SK-N-SH (cell line): ENCODE measurements at regions of chr15 and their contacts with region 1.

Region 1: DNA sequence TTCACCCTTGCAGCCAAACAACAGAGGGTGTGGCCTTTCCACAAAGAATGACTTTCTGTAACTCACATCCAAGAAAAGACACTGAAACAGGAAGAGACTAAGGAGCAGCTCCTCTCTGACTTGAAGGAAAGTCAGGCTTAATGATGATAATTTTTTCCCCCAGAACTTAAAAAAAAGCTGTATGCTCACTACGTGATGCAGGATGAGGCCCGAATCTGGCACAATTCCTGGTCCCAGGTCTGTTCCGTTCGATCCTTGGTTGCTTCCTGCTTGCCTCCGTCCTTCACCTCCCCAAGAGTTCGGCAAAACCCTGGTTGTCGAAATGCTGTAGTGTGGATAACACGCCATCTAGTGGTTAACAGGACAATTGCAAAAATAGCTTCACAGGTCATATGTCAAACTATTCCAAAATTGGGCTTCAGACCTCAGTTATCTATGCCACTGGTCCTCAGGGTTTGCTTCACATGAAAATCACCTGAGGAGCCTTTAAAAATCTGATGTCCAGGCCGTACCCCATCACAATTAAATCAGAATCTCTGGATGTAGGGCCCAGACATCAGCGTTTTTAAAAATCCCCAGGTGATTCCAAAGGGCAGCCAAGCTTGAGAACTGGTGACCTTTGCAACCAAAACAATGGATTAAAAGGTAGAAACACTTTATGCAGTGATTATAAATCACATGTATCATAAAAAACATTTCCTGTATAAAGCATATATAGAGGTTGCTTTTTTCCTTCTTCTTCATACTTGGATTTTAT is 28.1 kb upstream of the SYNM start:
- DNase-seq: peak; percentile 74
- H3K4me3 ChIP-seq: peak overlapping the region; percentile 36 to 60
- H3K27ac ChIP-seq: peak overlapping the region in 1 of 2 experiments; percentile 45; a peak in 2 of 4 replicates
- H3K4me1 ChIP-seq: no peaks in the 10 kb centered on the region; a peak in 1 of 4 replicates
- H3K27me3 ChIP-seq: no peaks in the 10 kb centered on the region
- CTCF ChIP-seq: peak; percentile 91
- EP300 ChIP-seq: no peak
- RAD21 ChIP-seq: peak; percentile 94

Region 2: DNA sequence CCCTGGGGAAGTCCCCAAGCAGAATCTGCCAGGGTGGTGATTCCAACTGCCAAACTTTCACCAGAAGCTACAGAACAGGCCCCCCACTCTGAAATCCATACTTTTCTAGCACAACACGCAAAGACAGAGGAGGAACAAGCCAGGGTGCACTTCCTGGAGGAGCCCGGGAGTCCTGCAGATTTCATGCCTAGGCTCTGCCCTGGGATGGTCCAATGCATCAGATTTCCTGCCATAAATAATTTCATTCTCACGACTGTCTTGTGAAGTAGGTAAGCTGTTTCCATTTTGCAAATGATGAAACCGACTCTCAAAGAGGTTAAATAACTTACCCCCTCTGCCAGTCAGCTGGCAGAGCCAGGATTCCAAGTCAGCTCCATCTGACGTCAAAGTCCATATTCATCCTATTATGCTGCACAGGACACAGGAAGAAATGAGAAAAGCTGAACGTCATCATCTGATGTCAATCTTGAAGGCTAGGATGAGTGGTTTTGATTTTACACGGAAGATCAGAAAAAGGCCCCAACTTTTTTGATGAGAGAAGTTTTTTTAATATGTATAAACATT is 563.2 kb before region 1 on chr15:
- CTCF ChIA-PET with region 1: interaction called, 41 read pairs
- POLR2A ChIA-PET with region 1: no interaction called
- DNase-seq: no peak
- H3K4me3 ChIP-seq: no peak overlapping the region
- H3K27ac ChIP-seq: no peak overlapping the region
- H3K4me1 ChIP-seq: no peaks in the 10 kb centered on the region
- H3K27me3 ChIP-seq: no peaks in the 10 kb centered on the region
- CTCF ChIP-seq: no peak
- EP300 ChIP-seq: no peak
- RAD21 ChIP-seq: no peak

Region 3: DNA sequence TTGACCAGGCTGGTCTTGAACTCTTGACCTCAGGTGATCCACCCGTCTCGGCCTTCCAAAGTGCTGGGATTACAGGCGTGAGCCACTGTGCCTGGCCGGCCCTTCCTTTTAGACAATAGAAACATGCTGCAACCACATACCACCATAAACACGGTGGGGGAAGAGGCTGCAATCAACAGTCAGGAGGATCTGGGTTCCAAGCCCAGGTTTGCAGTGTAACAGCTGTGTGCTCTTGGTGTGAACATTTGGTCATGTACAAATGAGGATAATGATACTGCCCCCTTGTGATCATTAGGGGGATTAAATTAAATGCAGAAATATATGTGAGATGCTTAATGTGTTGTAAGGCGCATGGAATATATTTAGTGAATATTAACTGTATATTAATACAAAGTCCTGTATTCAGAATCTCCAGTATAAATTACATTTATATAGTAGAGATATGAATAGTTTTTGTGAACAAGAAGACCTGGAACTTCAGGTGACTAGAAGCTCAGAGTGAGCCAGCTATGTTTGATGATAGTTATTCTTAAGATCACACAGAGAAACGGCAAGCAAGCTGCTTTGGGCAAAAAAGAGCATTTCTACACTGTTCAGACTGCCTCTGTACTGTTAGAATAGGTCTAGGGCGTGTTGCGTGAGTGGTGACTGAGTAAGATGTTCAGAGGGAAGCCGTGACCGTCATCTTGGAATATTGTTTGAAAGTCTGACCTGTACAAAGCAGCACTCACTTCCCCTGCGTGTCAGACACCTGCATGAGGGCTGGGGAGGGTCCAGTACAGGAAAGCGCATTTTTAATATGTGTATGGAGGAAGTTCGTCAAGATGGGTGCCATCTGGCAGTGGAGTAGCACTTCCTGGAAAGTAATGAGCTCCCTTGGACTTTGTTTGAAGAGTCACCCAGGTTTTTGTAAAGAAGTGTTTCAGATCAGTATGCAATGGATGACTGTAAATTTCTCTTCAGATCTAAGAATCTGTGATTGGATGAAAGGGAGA is 194.9 kb before region 1 on chr15:
- CTCF ChIA-PET with region 1: interaction called, 10 read pairs
- POLR2A ChIA-PET with region 1: no interaction called
- DNase-seq: peak; percentile 67
- H3K4me3 ChIP-seq: peak overlapping the region in 1 of 2 experiments; percentile 36; a peak in 1 of 4 replicates
- H3K27ac ChIP-seq: no peak overlapping the region
- H3K4me1 ChIP-seq: peaks cover 3 to 13% of the 10 kb centered on the region in 2 experiments; a peak in 2 of 4 replicates
- H3K27me3 ChIP-seq: no peaks in the 10 kb centered on the region
- CTCF ChIP-seq: peak; percentile 75
- EP300 ChIP-seq: no peak
- RAD21 ChIP-seq: peak; percentile 68

Region 4: GRCh38 chr15:99014803-99015676 is 61.7 kb before region 1 on chr15:
- CTCF ChIA-PET with region 1: no interaction called
- POLR2A ChIA-PET with region 1: no interaction called
- DNase-seq: peak; percentile 78
- H3K4me3 ChIP-seq: peak overlapping the region; percentile 60 to 64
- H3K27ac ChIP-seq: peak overlapping the region in 1 of 2 experiments; percentile 18; a peak in 1 of 4 replicates
- H3K4me1 ChIP-seq: peaks cover 11 to 12% of the 10 kb centered on the region in 2 experiments; a peak in 2 of 4 replicates
- H3K27me3 ChIP-seq: no peaks in the 10 kb centered on the region
- CTCF ChIP-seq: no peak
- EP300 ChIP-seq: no peak
- RAD21 ChIP-seq: no peak

Region 5: DNA sequence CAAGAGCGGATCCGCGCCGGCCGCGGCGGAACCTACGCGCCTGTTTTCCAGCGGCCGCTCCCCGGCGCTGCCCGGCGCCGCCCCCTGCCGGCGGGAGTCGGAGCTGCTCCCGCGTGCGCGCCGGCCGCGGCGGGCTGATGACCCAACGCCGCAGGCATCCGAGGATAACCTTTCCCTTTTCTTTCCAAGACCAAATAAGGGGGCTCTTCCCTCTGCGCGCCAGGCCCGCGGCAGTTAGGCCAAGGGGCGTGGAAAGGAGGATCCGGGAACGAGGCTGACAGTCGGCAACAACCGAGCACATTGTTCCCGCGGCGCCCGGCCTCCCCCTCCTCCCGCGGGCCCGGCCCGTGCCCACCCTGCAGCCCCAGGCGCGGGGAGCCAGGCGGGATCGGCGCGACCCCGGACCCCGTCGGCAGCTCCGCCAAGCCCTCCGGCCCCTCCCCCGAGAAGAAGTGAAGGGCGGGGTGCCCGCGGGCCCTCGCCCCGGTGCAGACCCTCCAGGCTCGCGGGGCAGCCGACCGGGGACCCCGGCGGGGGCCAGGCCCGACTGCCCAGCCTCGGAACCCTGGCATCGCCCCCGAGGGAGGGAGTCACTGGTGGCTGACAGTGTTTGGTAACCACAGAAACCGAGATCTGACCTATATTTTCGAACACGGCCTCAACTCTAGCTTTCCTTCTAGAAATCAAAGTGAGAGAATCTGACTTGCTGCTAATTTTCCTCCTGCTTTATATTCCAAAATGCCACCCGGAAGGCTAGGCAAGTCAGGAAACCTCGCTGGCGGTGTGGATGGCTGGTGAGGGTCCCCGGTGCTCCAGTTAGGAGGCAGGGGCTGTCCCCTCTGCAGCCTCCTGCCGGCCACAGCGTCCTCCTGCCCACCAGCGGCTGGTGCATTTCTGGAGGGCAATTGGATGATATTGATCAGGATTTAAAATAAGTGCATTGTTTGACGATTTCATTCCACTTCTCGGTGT is 17.4 kb before region 1 on chr15:
- CTCF ChIA-PET with region 1: interaction called, 20 read pairs
- POLR2A ChIA-PET with region 1: no interaction called
- DNase-seq: peak; percentile 93
- H3K4me3 ChIP-seq: peak overlapping the region; percentile 60 to 68
- H3K27ac ChIP-seq: peak overlapping the region; percentile 40 to 57; a peak in 3 of 4 replicates
- H3K4me1 ChIP-seq: no peaks in the 10 kb centered on the region; a peak in 1 of 4 replicates
- H3K27me3 ChIP-seq: no peaks in the 10 kb centered on the region
- CTCF ChIP-seq: peak; percentile 71
- EP300 ChIP-seq: no peak; a peak in 1 of 4 replicates
- RAD21 ChIP-seq: peak; percentile 58; the same call in 1 of the 2 replicates

Region 6: DNA sequence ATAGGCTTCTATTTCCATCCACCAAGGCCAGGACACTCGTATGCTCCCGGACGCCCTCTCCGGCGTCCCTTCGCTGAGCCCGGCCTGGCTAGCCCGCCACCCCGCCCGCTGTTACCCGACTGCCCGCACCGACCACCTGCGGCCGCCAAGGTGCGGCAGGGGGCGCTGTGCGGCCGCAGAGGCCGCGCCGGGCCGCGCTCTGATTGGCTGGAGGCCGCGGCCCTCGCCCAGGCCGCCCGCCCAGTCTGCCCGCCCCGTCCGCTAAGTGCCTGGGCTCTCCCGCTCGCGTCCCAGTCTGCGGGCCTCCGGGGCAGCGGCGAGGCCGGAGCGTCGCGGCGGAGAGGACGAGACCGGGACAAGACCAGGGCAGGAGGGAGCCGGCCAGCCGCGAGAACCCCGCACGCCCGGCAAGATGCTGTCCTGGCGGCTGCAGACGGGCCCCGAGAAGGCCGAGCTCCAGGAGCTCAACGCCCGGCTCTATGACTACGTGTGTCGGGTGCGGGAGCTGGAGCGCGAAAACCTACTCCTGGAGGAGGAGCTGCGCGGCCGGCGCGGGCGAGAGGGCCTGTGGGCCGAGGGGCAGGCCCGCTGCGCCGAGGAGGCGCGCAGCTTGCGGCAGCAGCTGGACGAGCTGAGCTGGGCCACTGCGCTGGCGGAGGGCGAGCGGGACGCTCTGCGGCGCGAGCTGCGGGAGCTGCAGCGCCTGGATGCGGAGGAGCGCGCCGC is 28.2 kb after region 1 on chr15 and contains the start of gene SYNM:
- CTCF ChIA-PET with region 1: interaction called, 30 read pairs
- POLR2A ChIA-PET with region 1: no interaction called
- DNase-seq: peak; percentile 98
- H3K4me3 ChIP-seq: peak within 1 kb of the TSS; percentile 61 to 62
- H3K27ac ChIP-seq: peak within 1 kb of the TSS in 1 of 2 experiments; percentile 75; a peak in 2 of 4 replicates
- H3K4me1 ChIP-seq: peaks cover 0 to 10% of the 10 kb centered on the region in 2 experiments; a peak in 2 of 4 replicates
- H3K27me3 ChIP-seq: no peaks in the 10 kb centered on the region
- CTCF ChIP-seq: peak; percentile 72
- EP300 ChIP-seq: no peak
- RAD21 ChIP-seq: peak; percentile 78
- polyA plus RNA-seq, gene SYNM: 4.3 and 5.0 TPM in 2 replicates

Region 7: DNA sequence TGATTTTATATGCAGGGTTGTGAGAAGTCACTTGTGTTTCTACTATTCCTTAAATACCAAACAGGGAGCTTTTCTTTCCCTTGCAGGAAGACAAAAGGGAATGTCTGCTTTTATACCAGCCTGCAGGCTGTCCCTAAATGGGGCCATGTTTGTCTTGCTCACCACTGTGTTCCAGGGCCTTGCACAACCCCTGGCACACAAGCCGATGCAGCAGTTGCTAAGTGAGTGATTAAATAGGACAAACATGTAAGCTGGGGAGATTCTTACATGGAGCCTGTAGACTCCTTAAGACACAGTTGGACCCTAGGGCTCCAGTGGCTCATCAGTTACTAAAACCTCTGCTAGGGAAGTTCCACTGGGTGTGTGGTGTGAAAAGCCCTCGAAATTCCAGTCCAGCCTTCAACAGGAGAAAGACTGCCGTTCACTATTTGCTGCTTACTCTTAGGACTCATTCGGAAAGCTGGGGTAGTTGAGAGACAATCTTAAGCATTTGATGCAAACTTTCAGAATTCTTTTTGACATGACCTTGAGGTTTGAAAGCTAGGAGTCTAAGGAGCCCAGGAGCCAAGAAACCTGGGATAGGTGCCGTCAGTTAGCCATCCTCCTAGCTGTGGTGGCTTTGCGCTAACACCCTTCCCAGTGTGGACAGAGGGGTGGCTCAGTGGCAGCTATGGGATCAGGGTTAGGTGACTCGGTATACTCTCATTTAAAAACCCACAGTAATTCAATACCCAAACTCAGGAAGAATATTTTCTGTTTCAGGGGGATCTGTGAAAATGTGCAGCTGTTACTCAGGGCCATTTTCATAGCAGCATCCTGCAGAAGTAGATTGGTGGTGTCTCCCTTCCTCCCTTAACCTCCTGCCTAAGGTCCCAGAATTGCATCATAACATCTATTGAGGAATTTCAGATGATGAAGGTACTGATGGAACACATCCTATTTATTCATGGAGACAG is 67.2 kb after region 1 on chr15:
- CTCF ChIA-PET with region 1: no interaction called
- POLR2A ChIA-PET with region 1: no interaction called
- DNase-seq: no peak
- H3K4me3 ChIP-seq: no peak overlapping the region
- H3K27ac ChIP-seq: no peak overlapping the region
- H3K4me1 ChIP-seq: peaks cover 0 to 3% of the 10 kb centered on the region in 2 experiments; a peak in 1 of 4 replicates
- H3K27me3 ChIP-seq: no peaks in the 10 kb centered on the region
- CTCF ChIP-seq: no peak
- EP300 ChIP-seq: no peak
- RAD21 ChIP-seq: no peak